Gastrocnemius medialis (tissue), 4 donors: ENCODE measurements at regions of chr17 and their contacts with region 1.

Region 1: GRCh38 chr17:50361561-50362480 is 11.2 kb downstream of the MRPL27 start:
- DNase-seq: peak in 1 of 2 donors; percentile 48
- ATAC-seq: peak; percentile 67 to 86
- H3K4me3 ChIP-seq: no peak overlapping the region
- H3K27ac ChIP-seq: peak overlapping the region in 1 of 4 donors; percentile 23
- H3K4me1 ChIP-seq: peaks cover 0 to 5% of the 10 kb centered on the region in 2 donors
- H3K27me3 ChIP-seq: no peaks in the 10 kb centered on the region
- CTCF ChIP-seq: peak; percentile 48 to 77 (median 65)
- POLR2A ChIP-seq: no peak

Region 2: GRCh38 chr17:50406578-50406977 is 44.8 kb after region 1 on chr17:
- in situ Hi-C with region 1: no loop called
- intact Hi-C with region 1: no loop called
- DNase-seq: no peak
- ATAC-seq: no peak
- H3K4me3 ChIP-seq: no peak overlapping the region
- H3K27ac ChIP-seq: no peak overlapping the region
- H3K4me1 ChIP-seq: no peaks in the 10 kb centered on the region
- H3K27me3 ChIP-seq: no peaks in the 10 kb centered on the region
- CTCF ChIP-seq: no peak
- POLR2A ChIP-seq: no peak

Region 3: DNA sequence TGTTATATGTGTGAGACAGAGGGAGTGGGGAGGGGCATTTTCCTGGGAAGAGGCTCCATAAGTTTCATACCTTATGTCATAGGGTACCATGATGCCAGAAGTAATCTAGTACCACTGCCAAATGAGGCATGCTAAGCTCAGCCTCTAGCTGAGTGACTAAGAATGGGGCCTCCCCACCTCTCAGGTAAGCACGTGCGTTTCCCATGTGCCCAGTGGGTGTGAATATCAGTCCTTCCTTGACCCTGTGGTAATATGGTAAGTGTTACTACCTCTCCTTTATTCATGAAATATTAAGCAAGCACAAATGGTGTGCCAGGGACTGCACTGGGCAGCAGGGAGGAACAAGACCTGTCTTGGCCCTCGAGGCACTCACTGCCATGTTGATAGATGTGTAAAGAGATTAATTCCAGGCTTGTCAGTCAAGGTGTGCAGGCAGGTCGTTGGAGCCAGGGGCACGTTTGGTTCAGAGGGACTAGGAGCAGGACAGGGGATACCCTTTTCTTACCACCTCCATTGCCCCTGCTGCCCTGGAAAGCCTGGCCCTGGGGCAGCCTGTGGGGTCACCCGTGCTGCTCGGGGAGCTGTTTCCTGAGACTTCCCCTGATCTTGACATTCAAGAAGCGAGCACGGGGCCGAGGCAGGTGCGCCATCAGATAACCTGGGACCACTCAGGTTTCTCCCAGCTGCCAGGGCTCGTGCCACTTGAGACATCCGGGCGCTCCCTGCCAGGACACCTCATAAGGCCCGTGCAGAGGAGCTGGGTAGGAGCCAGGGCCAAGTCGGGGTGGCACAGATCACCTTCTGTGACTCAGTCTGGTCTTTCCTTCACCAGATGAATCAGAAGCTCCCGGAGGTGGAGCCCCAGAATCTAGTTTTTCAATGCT is 125.6 kb after region 1 on chr17:
- in situ Hi-C with region 1: loop called in 1 of 4 experiments (anchors 5 kb)
- intact Hi-C with region 1: loop called (anchors 5 kb)
- DNase-seq: peak; percentile 53 to 69
- ATAC-seq: peak; percentile 53 to 67
- H3K4me3 ChIP-seq: no peak overlapping the region
- H3K27ac ChIP-seq: peak overlapping the region in 3 of 4 donors; percentile 5 to 67 (median 55)
- H3K4me1 ChIP-seq: peaks cover 4 to 9% of the 10 kb centered on the region in 2 donors
- H3K27me3 ChIP-seq: no peaks in the 10 kb centered on the region
- CTCF ChIP-seq: no peak
- POLR2A ChIP-seq: no peak